AG04449 (cell line): ENCODE measurements at regions of chr6 and their contacts with region 1.

Region 1: GRCh38 chr6:107674995-107675738 is 148.9 kb downstream of the SCML4 start:
- DNase-seq: no peak
- H3K4me3 ChIP-seq: no peak overlapping the region
- CTCF ChIP-seq: peak; percentile 95

Region 2: DNA sequence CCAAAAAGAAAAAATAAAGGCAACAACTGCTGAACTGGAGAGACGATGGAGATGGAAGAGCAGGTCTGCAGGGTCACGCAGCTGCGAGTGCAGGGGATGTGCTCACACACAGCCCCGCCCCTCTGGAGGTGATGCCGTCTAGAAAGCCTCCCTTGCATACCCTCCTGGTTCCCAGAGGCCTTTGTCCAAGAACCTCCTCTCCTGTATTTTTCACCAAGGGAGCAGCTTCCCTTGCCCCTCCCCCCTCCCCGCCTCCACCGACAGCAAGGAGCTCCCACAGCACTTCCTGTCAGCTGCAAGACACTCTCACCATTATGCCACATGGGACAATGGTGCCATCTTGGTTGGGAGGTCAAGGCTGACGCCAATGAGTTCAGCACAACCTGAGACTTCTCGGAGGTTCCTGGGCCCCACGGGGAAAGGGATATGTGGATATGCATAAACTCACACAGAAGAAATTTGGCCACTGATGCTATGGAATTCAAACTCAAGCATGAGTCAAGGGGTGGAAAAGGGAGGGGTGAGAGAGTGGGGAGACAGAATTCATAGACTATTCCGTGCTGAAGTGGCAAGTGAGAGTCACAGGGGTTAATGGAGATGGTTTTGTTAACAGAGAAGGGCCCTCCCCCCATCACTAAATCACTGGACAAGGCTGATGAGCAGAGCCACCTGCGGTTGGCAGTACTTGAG is 16.0 kb after region 1 on chr6:
- CTCF ChIA-PET with region 1: interaction called, 37 read pairs
- POLR2A ChIA-PET with region 1: no interaction called
- DNase-seq: peak; percentile 94
- H3K4me3 ChIP-seq: no peak overlapping the region
- CTCF ChIP-seq: no peak

Region 3: GRCh38 chr6:107698146-107698545 is 23.0 kb after region 1 on chr6:
- CTCF ChIA-PET with region 1: interaction called, 78 read pairs
- POLR2A ChIA-PET with region 1: no interaction called
- DNase-seq: peak; percentile 45
- H3K4me3 ChIP-seq: no peak overlapping the region
- CTCF ChIP-seq: no peak

Region 4: GRCh38 chr6:107704347-107705013 is 29.3 kb after region 1 on chr6:
- CTCF ChIA-PET with region 1: interaction called, 78 read pairs
- POLR2A ChIA-PET with region 1: no interaction called
- DNase-seq: no peak
- H3K4me3 ChIP-seq: no peak overlapping the region
- CTCF ChIP-seq: peak; percentile 55

Region 5: GRCh38 chr6:107847844-107848802 is 173.0 kb after region 1 on chr6:
- CTCF ChIA-PET with region 1: interaction called, 125 read pairs
- POLR2A ChIA-PET with region 1: no interaction called
- DNase-seq: no peak
- H3K4me3 ChIP-seq: peak overlapping the region; percentile 66
- CTCF ChIP-seq: peak; percentile 97

Region 6: DNA sequence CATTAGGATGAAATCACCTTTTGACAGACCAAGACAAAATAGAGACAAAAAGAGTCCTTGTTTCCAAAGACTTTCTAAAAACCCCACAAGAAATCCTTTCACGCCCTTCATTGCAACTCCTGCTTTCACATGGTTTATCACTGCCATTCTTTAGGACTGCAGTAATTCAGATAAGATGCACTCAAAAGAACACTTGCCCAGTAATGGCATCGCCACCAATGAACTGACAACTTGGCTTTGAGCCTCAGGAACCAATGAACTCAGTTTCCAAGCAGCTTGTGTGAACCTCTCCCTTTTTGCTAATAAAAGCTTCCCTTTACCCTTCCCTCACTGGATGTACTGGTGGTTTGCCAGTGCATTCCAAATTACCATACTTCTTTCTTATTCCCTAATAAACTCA is 377.5 kb after region 1 on chr6:
- CTCF ChIA-PET with region 1: interaction called, 12 read pairs
- POLR2A ChIA-PET with region 1: no interaction called
- DNase-seq: no peak
- H3K4me3 ChIP-seq: no peak overlapping the region
- CTCF ChIP-seq: no peak

Region 7: DNA sequence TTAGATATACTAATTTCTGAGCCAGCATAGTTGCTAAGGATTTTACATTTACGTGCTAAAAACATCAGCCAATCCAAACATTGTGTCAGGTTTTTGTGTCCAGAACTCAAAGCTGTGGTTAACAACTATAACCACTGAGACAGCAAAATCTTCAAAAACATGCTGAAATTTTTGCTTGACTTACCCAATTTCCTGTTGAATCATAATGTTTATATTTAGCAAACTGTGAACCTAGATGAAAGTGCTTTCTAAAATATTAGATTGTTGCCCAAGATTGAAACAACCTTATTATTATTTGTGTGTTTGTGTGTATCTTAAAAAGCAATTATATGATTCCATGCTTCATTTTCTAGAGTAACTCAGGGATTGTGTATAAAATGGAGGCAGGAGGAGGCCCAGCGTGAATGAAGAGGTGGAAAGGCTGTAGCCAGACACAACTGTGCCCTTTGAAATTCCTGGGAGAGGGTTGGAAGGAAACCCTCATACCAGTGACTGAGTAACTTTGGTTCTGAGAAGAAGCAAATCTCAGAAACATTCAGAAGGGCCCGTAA is 1221.0 kb after region 1 on chr6:
- CTCF ChIA-PET with region 1: no interaction called
- POLR2A ChIA-PET with region 1: no interaction called
- DNase-seq: peak; percentile 84
- H3K4me3 ChIP-seq: no peak overlapping the region
- CTCF ChIP-seq: no peak